Transverse colon (tissue), 4 donors: ENCODE measurements at regions of chr1 and their contacts with region 1.

Region 1: DNA sequence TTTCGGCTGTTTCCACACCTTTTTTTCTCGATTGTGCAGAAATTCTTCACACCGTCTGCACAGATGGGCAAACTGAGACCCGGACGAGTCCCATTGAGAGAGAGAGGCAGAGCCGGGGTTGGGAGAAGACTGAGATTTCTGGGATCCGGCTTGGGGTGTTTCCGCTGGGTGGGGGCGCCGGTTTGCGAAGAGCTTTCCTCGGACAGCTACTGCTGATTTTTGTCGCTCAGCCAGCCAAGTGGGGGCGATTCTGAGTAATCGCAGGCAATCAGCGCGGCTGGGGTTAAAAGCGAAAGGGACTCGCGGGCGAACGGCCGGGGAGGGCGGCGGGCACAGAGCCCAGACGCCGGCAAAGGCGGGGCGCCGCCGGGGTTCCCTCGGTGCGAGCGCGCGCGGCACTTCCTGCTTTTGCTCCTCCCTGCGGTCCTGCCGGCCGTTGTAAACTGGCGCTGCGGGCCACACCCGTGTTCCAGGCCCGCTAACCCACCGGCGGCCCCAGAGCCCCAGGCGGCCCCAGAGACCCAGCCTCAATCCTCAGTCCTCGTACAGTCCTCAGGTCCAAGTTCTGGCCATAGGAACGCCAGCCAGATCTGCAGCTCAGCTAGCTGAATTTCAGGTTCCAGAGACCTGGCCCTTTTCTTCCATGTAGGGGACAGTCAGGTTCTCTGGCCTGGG is 32.4 kb upstream of the JUN start:
- DNase-seq: peak; percentile 96
- H3K4me3 ChIP-seq: peak overlapping the region; percentile 45 to 69 (median 53)
- H3K27ac ChIP-seq: peak overlapping the region; percentile 93 to 96 (median 94)
- H3K4me1 ChIP-seq: peaks cover 5 to 43% (median 20%) of the 10 kb centered on the region in 4 donors
- H3K27me3 ChIP-seq: no peaks in the 10 kb centered on the region
- CTCF ChIP-seq: peak in 1 of 5 experiments; percentile 8
- EP300 ChIP-seq: peak; percentile 49
- POLR2A ChIP-seq: peak; percentile 62

Region 2: DNA sequence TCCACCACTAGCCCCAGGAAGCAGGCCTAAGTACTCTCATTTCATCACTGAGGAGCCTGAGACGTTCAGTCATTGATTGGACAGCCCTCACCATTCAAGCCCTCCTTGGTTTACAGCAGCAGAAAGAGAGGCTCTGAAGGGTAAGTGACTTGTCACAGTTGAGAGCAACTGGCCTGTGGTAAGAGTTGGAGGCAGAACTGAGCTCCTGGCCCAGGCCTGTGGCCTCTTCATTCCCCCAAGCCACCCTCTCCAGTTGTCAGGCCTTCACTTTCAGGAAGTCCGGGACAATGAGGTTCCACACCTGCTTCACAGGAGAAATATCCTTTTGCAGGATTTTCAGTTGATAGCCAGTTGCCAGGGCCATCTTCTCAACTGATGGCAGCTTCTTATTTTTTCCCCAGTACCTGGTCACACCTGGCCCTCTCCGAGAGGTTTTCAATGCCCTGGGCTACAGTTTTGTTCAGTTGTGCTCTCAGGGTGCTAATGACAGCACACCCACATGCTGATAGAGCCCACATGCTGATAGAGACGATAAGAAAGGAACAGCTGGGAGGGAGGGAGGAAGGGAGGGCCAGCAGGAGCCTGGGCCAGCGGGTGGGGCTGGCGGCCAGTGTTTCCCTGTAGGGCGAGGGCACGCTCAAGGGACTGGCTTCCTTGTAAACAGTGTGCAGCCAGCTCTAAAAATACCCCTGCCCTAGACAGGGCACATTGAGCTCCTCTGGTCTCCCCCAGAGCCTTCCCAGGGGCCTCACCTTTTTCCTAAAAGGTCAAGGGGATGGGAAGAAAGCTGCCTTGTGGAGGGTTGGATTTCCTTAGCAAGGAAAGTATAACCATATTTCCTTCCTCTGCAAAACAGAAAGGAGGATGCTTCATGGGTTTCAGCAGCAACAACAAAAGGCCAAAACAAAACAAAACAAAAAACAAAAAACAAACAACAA is 80.3 kb after region 1 on chr1:
- in situ Hi-C with region 1: no loop called
- intact Hi-C with region 1: loop called (anchors 10 kb)
- DNase-seq: peak; percentile 87
- H3K4me3 ChIP-seq: no peak overlapping the region
- H3K27ac ChIP-seq: peak overlapping the region; percentile 74 to 84 (median 83)
- H3K4me1 ChIP-seq: peaks cover 43 to 85% (median 71%) of the 10 kb centered on the region in 4 donors
- H3K27me3 ChIP-seq: no peaks in the 10 kb centered on the region
- CTCF ChIP-seq: no peak
- EP300 ChIP-seq: peak; percentile 44
- POLR2A ChIP-seq: no peak